ENCODE measurements at regions of chr12 and their contacts with region 1.

Region 1: GRCh38 chr12:121432740-121433480 is 33.0 kb downstream of the RNF34 start:
- DNase-seq: no peak
- ATAC-seq: no peak
- H3K4me3 Mint-ChIP-seq: no peak overlapping the region
- H3K27ac Mint-ChIP-seq: peak overlapping the region; percentile 46
- H3K4me1 Mint-ChIP-seq: peaks cover 3% of the 10 kb centered on the region
- H3K27me3 Mint-ChIP-seq: no peaks in the 10 kb centered on the region

Region 2: GRCh38 chr12:121388421-121388981 is 44.4 kb before region 1 on chr12:
- CTCF ChIA-PET with region 1: no interaction called
- POLR2A ChIA-PET with region 1: no interaction called
- DNase-seq: no peak
- ATAC-seq: no peak
- H3K4me3 Mint-ChIP-seq: no peak overlapping the region
- H3K27ac Mint-ChIP-seq: no peak overlapping the region
- H3K4me1 Mint-ChIP-seq: peaks cover 17% of the 10 kb centered on the region
- H3K27me3 Mint-ChIP-seq: peaks cover 4% of the 10 kb centered on the region

Region 3: DNA sequence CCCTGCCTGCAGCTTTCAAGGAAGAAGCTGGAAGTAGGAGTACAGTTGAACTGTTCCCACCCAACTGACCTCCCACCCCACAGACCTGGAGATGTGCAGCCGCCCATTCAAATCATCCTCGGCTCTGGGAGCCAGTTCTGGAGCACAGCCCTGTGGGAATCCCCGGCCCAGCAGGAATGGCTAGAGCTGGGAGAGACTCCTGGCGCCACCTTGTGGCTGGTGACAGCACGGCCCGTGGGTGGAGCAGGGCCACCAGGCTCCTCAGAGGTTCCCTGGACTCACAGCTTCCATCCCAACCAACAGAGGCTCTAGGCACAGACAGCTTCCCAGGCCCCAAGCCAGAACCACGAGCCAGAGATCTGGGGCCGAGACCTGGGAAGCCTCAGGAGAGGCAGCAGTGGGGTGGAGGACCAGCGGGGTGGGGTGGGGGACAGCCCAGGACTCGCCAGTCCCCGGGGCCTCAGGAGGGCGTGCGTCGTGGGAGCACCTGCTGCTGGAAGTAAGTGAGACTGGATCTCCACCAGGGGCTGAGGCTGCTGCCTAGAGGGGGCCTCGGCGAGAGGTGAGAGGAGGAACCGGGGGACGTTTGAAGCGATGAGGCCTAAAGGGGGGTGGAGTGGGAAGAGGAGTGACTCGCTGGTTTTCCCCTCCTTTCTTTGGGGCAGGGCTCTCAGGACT is 10.4 kb after region 1 on chr12:
- CTCF ChIA-PET with region 1: interaction called, 18 read pairs
- POLR2A ChIA-PET with region 1: no interaction called
- DNase-seq: peak; percentile 68
- ATAC-seq: peak; percentile 84
- H3K4me3 Mint-ChIP-seq: no peak overlapping the region
- H3K27ac Mint-ChIP-seq: peak overlapping the region; percentile 43
- H3K4me1 Mint-ChIP-seq: peaks cover 1% of the 10 kb centered on the region
- H3K27me3 Mint-ChIP-seq: no peaks in the 10 kb centered on the region

Region 4: GRCh38 chr12:121550974-121551634 is 118.2 kb after region 1 on chr12:
- CTCF ChIA-PET with region 1: no interaction called
- POLR2A ChIA-PET with region 1: no interaction called
- DNase-seq: no peak
- ATAC-seq: no peak
- H3K4me3 Mint-ChIP-seq: no peak overlapping the region
- H3K27ac Mint-ChIP-seq: no peak overlapping the region
- H3K4me1 Mint-ChIP-seq: peaks cover 17% of the 10 kb centered on the region
- H3K27me3 Mint-ChIP-seq: no peaks in the 10 kb centered on the region